ENCODE measurements at regions of chr15 and their contacts with region 1.

Region 1: GRCh38 chr15:25438601-25439368 is at the start of gene UBE3A:
- DNase-seq: peak; percentile 94
- H3K4me3 ChIP-seq: peak within 1 kb of the TSS; percentile 98
- H3K27ac ChIP-seq: peak within 1 kb of the TSS; percentile 84
- H3K4me1 ChIP-seq: peaks cover 35% of the 10 kb centered on the region
- CTCF ChIP-seq: peak; percentile 17
- total RNA-seq, gene UBE3A: 95.3 and 95.9 TPM in 2 replicates

Region 2: DNA sequence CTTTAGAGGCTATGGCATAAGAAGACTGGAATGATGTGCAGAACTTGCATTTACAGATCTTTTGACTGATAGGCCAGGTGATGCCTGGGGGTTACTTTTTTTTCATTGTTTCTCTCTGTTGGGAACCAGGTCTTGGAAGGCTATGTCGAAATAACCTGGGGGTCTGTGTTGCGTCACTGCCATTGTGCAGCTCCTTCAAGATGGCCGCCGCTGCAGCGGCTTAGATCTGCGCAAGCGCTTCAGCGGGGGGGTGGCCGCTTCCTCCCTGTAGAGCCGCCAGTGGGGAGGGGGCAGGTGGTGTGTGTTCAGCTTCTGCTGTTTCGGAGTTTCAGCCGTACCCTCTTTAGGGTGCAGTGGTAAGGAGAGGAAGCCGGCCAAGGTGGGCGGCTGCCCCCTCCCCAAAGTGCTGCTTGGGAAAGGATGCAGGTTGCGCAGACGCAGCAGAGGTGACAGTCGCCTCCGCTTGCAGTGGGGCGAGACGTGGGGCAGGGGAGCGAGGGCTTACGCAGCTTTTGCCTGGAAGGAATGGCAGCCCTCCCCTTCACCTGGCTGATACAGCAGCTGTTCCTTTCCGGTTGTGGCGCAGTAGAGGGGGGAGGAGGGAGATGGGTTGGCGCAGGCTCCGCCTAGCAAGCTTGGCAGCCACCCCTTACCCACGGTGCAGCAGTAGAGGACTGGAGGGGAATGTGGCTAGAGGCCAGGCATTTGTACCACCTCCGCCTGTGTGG is 482.5 kb before region 1 on chr15:
- CTCF ChIA-PET with region 1: no interaction called
- POLR2A ChIA-PET with region 1: no interaction called
- intact Hi-C with region 1: loop called (anchors 5 kb)
- DNase-seq: no peak
- H3K4me3 ChIP-seq: no peak overlapping the region
- H3K27ac ChIP-seq: no peak overlapping the region
- H3K4me1 ChIP-seq: no peaks in the 10 kb centered on the region
- CTCF ChIP-seq: no peak

Region 3: GRCh38 chr15:25136119-25136518 is 302.7 kb before region 1 on chr15:
- CTCF ChIA-PET with region 1: no interaction called
- POLR2A ChIA-PET with region 1: no interaction called
- intact Hi-C with region 1: loop called (anchors 5 kb)
- DNase-seq: peak; percentile 41
- H3K4me3 ChIP-seq: no peak overlapping the region
- H3K27ac ChIP-seq: no peak overlapping the region
- H3K4me1 ChIP-seq: no peaks in the 10 kb centered on the region
- CTCF ChIP-seq: peak; percentile 71

Region 4: DNA sequence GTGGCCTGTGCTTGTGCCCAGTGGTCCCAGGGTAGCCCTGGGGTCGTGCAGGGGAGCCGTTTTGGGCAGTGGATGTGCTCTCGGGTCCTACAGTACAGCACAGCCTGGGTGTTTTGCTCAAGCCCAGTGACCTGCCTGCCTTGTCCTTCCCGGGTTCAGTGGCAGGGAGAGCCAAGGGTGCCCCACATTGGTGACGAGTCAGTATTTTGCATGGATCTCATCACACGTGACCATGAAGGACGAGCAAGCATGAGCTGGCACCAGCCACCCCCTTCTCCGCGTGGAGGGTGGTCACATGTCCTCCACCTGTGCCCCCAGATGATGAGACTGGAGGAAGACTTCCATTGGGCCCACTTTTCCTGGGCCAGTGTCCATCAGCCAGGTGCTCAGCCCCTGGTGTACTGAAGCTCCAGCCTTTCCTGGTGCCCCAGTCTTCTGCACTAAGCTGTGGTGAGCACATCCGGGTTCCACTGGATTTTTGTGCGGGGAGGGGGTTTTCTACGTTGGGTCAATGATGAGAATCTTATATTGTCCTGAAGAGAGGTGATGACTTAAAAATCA is 197.5 kb before region 1 on chr15:
- CTCF ChIA-PET with region 1: no interaction called
- POLR2A ChIA-PET with region 1: no interaction called
- intact Hi-C with region 1: no loop called
- DNase-seq: no peak
- H3K4me3 ChIP-seq: no peak overlapping the region
- H3K27ac ChIP-seq: no peak overlapping the region
- H3K4me1 ChIP-seq: no peaks in the 10 kb centered on the region
- CTCF ChIP-seq: no peak

Region 5: DNA sequence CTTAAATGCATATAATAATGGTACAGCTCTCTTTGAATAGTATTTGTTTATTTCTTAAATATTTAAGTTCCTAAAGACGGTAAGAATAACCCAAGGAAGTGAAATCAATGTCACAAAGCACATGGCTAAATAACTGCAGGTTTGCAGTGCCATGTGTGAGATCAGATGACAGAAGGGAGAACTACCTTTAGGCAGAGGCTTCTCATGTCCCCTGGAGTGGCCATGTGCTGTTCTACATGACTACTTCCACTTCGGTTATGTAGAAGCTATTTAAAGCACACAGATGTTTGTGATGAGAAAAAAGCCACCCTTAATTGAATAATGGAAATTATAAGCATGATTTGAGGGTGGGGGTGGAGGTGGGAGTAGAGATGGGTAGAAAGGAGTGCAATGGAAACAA is 109.1 kb before region 1 on chr15:
- CTCF ChIA-PET with region 1: no interaction called
- POLR2A ChIA-PET with region 1: interaction called, 5 read pairs
- intact Hi-C with region 1: loop called (anchors 2 kb)
- DNase-seq: peak; percentile 83
- H3K4me3 ChIP-seq: peak overlapping the region; percentile 8
- H3K27ac ChIP-seq: peak overlapping the region; percentile 56
- H3K4me1 ChIP-seq: peaks cover 45% of the 10 kb centered on the region
- CTCF ChIP-seq: no peak

Region 6: DNA sequence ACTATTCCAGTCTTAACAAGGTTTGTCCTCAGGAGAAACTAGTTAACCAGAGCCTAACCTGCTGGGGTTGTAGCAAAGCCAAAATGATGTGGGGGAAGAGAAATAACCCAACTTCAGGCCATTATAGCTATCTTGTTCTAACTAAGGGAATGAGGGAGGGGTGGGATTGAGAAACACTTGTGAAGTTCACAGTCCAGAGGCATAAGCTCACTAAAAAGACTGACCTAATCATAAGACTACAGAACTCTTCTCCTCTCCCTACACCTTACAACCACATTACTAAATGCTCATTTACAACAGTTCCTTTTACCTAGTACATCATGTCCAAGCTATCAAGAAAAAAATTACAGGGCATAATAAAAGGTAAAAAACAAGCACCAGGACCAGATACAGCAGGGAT is 52.8 kb before region 1 on chr15:
- CTCF ChIA-PET with region 1: no interaction called
- POLR2A ChIA-PET with region 1: no interaction called
- intact Hi-C with region 1: no loop called
- DNase-seq: no peak
- H3K4me3 ChIP-seq: no peak overlapping the region
- H3K27ac ChIP-seq: no peak overlapping the region
- H3K4me1 ChIP-seq: no peaks in the 10 kb centered on the region
- CTCF ChIP-seq: no peak

Region 7: GRCh38 chr15:25486051-25486450 is 47.3 kb after region 1 on chr15:
- CTCF ChIA-PET with region 1: no interaction called
- POLR2A ChIA-PET with region 1: no interaction called
- intact Hi-C with region 1: no loop called
- DNase-seq: no peak
- H3K4me3 ChIP-seq: no peak overlapping the region
- H3K27ac ChIP-seq: no peak overlapping the region
- H3K4me1 ChIP-seq: no peaks in the 10 kb centered on the region
- CTCF ChIP-seq: no peak

Region 8: GRCh38 chr15:26595611-26596010 is 1156.8 kb after region 1 on chr15:
- CTCF ChIA-PET with region 1: no interaction called
- POLR2A ChIA-PET with region 1: no interaction called
- intact Hi-C with region 1: no loop called
- DNase-seq: no peak
- H3K4me3 ChIP-seq: no peak overlapping the region
- H3K27ac ChIP-seq: no peak overlapping the region
- H3K4me1 ChIP-seq: no peaks in the 10 kb centered on the region
- CTCF ChIP-seq: no peak

Measured in OCI-LY7 (cell line).